Calu3 (cell line): ENCODE measurements at regions of chr9 and their contacts with region 1.

Region 1: DNA sequence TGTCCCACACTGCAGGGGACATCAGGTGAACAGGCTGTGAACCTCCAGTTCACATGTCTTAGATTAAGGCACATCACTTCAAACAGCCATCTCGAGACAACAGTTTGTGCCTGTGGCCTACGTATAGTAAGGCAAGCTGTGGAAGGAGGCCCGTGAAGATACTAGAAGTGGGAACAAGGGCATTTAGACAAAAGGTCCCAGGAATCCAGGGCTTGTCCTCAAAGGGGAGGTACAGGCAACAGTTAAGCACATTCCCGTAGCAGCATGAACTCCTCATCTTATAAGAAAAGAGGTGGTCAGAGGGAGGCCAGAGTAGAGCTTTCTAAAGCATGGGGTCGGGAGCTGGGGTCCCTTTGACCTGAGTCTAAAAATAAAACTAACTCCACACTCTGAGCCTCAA is 122.5 kb upstream of the TRPM3 start:
- DNase-seq: no peak
- H3K4me3 Mint-ChIP-seq: no peak overlapping the region
- H3K27ac Mint-ChIP-seq: no peak overlapping the region
- H3K4me1 Mint-ChIP-seq: no peaks in the 10 kb centered on the region
- H3K27me3 Mint-ChIP-seq: peaks cover 46% of the 10 kb centered on the region
- CTCF ChIP-seq: no peak

Region 2: GRCh38 chr9:70917277-70917676 is 326.7 kb before region 1 on chr9:
- CTCF ChIA-PET with region 1: no interaction called
- intact Hi-C with region 1: no loop called
- DNase-seq: no peak
- H3K4me3 Mint-ChIP-seq: no peak overlapping the region
- H3K27ac Mint-ChIP-seq: no peak overlapping the region
- H3K4me1 Mint-ChIP-seq: no peaks in the 10 kb centered on the region
- H3K27me3 Mint-ChIP-seq: no peaks in the 10 kb centered on the region
- CTCF ChIP-seq: no peak

Region 3: DNA sequence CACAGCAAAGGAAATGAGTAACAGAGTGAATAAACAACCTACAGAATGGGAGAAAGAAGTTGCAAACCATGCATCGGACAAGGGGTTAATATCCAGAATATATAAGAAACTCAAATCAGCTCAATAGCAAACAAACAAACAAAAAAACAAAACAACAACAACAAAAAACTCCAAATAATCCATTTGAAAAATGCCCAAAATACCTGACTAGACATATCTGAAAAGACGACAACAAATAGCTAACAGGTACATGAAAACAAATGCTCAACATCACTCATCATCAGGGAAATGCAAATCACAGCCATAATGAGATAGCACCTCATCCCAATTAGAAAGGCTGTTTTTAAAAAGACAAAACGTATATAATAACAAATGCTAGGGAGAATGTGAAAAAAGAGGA is 233.7 kb before region 1 on chr9:
- CTCF ChIA-PET with region 1: no interaction called
- intact Hi-C with region 1: loop called (anchors 5 kb)
- DNase-seq: no peak
- H3K4me3 Mint-ChIP-seq: no peak overlapping the region
- H3K27ac Mint-ChIP-seq: no peak overlapping the region
- H3K4me1 Mint-ChIP-seq: no peaks in the 10 kb centered on the region
- H3K27me3 Mint-ChIP-seq: peaks cover 25% of the 10 kb centered on the region
- CTCF ChIP-seq: no peak

Region 4: GRCh38 chr9:71048280-71048679 is 195.7 kb before region 1 on chr9:
- CTCF ChIA-PET with region 1: no interaction called
- intact Hi-C with region 1: no loop called
- DNase-seq: no peak
- H3K4me3 Mint-ChIP-seq: no peak overlapping the region
- H3K27ac Mint-ChIP-seq: no peak overlapping the region
- H3K4me1 Mint-ChIP-seq: no peaks in the 10 kb centered on the region
- H3K27me3 Mint-ChIP-seq: peaks cover 50% of the 10 kb centered on the region
- CTCF ChIP-seq: no peak